A673 (cell line): ENCODE measurements at regions of chrX and their contacts with region 1.

Region 1: DNA sequence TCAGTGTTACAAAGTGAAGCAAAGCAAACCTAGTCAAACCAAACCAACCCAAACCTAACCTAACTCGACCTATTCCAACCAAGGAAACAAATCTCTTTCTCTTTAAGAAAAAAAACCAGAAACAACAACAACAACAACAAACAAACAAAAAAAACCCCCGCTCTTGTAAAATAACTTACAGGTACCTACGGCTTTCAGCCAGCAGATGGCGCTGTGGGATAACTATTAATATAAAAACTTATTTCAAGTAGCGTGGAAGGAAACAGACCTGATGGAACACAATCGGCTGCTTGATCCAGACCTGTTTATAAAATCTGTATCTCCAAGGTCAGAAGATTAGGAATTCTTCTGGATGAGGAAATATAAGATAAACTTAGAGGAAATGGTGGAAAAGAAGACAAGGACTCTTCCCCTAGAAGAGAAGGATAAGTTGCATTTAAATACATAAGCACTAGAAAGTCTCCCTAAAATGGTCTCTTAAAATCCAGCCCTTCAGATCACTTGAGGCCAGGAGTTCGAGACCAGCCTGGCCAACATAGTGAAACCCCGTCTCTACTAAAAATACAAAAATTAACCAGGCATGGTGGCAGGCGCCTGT is 34.4 kb upstream of the CDKL5 start:
- DNase-seq: peak; percentile 79
- H3K4me3 ChIP-seq: no peak overlapping the region
- H3K27ac ChIP-seq: no peak overlapping the region
- H3K4me1 ChIP-seq: peaks cover 4% of the 10 kb centered on the region
- H3K27me3 ChIP-seq: no peaks in the 10 kb centered on the region
- CTCF ChIP-seq: peak; percentile 90

Region 2: GRCh38 chrX:18031726-18032375 is 359.2 kb before region 1 on chrX:
- CTCF ChIA-PET with region 1: no interaction called
- POLR2A ChIA-PET with region 1: no interaction called
- intact Hi-C with region 1: no loop called
- DNase-seq: no peak
- H3K4me3 ChIP-seq: no peak overlapping the region
- H3K27ac ChIP-seq: no peak overlapping the region
- H3K4me1 ChIP-seq: no peaks in the 10 kb centered on the region
- H3K27me3 ChIP-seq: no peaks in the 10 kb centered on the region
- CTCF ChIP-seq: no peak

Region 3: GRCh38 chrX:18674788-18675735 is 284.0 kb after region 1 on chrX:
- CTCF ChIA-PET with region 1: no interaction called
- POLR2A ChIA-PET with region 1: no interaction called
- intact Hi-C with region 1: loop called (anchors 10 kb)
- DNase-seq: peak; percentile 77
- H3K4me3 ChIP-seq: peak overlapping the region; percentile 65
- H3K27ac ChIP-seq: peak overlapping the region; percentile 87
- H3K4me1 ChIP-seq: no peaks in the 10 kb centered on the region
- H3K27me3 ChIP-seq: no peaks in the 10 kb centered on the region
- CTCF ChIP-seq: no peak

Region 4: GRCh38 chrX:18899796-18900447 is 508.9 kb after region 1 on chrX:
- CTCF ChIA-PET with region 1: no interaction called
- POLR2A ChIA-PET with region 1: no interaction called
- intact Hi-C with region 1: loop called (anchors 5 kb)
- DNase-seq: peak; percentile 52
- H3K4me3 ChIP-seq: no peak overlapping the region
- H3K27ac ChIP-seq: no peak overlapping the region
- H3K4me1 ChIP-seq: peaks cover 16% of the 10 kb centered on the region
- H3K27me3 ChIP-seq: no peaks in the 10 kb centered on the region
- CTCF ChIP-seq: peak; percentile 59

Region 5: DNA sequence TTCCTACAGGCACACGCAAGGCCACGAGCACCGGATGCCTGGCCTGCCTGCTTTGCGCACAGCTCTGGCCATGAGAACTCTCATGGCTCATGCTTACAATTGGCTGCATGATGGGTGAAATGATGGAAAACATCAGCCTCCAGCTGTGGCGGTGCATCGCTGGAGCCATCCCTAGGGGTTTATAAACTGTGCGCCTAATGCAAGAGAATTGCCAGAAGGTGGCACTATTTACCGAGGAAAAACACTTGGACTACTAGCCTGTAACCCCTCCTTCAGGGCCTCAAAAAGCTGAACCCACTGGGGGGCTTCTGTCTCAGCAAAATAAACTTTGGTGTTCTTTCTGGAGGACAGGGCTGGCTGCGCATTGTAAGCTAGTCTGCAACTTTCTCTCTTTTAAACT is 540.9 kb after region 1 on chrX:
- CTCF ChIA-PET with region 1: no interaction called
- POLR2A ChIA-PET with region 1: no interaction called
- intact Hi-C with region 1: loop called (anchors 5 kb)
- DNase-seq: peak; percentile 90
- H3K4me3 ChIP-seq: no peak overlapping the region
- H3K27ac ChIP-seq: no peak overlapping the region
- H3K4me1 ChIP-seq: peaks cover 15% of the 10 kb centered on the region
- H3K27me3 ChIP-seq: no peaks in the 10 kb centered on the region
- CTCF ChIP-seq: peak; percentile 81

Region 6: DNA sequence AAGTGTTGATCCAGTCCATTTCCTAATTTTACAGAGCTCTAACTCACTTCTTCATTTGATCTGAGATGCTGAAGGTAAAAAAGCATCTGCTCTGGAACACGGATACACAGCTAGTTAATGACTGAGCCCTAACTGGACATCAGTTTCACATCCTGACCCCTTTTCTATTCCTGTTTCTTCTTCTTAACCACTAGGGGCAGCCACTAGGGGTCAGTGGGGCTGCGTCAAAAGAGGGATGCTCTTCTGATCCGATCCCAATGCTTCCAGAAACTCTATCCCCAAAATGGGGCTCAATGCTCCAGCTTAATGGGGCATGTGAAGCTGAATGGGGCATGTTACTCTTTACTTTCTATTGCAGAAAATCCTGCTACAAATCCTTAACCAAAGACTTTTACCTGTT is 626.2 kb after region 1 on chrX:
- CTCF ChIA-PET with region 1: no interaction called
- POLR2A ChIA-PET with region 1: no interaction called
- intact Hi-C with region 1: loop called (anchors 10 kb)
- DNase-seq: peak; percentile 63
- H3K4me3 ChIP-seq: no peak overlapping the region
- H3K27ac ChIP-seq: no peak overlapping the region
- H3K4me1 ChIP-seq: no peaks in the 10 kb centered on the region
- H3K27me3 ChIP-seq: no peaks in the 10 kb centered on the region
- CTCF ChIP-seq: peak; percentile 68

Region 7: GRCh38 chrX:19535476-19535875 is 1144.4 kb after region 1 on chrX:
- CTCF ChIA-PET with region 1: no interaction called
- POLR2A ChIA-PET with region 1: no interaction called
- intact Hi-C with region 1: loop called (anchors 2 kb)
- DNase-seq: peak; percentile 51
- H3K4me3 ChIP-seq: no peak overlapping the region
- H3K27ac ChIP-seq: no peak overlapping the region
- H3K4me1 ChIP-seq: no peaks in the 10 kb centered on the region
- H3K27me3 ChIP-seq: no peaks in the 10 kb centered on the region
- CTCF ChIP-seq: peak; percentile 55